ENCODE measurements at regions of chr17 and their contacts with region 1.

Region 1: DNA sequence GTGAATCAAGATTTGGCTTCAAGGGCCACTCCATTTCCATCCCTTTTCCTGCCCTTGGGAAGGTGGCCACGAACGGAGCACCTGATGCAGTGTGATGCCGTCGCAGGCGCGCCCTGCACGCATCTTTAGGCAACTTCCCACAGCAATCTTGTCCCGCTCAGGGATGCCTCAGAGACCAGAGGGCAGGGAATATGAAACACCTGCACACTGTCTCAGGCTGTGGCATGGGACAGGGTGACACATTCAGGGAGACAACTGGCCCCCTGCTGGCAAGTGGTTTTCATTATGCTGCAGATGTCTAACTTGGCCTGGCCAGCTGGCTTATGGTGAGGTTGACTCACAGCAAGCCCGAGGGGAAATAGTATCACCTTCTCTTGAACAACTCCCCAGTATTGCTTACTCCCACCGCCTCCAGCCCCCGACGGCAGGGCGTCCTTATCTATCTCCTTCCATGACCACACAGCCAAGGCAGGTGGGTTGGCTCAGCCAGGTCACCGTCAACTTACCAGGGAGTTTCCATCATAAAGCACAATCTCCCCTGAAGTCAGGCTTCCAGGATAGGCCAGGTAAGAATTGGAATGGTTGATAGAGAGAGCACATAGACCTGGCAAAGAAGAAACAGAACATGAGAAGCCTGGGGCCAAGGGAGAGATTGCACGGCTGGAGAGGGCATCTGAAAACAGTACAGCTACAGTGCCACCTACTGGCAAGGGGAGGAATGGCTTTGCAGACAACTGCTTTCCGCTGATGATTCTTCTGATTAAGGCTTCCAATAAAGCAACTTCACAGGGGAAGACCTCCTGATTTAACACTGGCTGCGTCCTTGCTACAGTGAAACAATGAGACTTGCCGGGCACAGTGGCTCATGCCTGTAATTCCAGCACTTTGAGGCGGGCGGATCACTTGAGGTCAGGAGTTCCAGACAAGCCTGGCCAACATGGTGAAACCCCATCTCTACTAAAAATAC is 21.1 kb downstream of the WIPI1 start:
- ATAC-seq: peak; percentile 52 to 89 (median 82)
- H3K4me3 ChIP-seq: no peak overlapping the region
- H3K27ac ChIP-seq: no peak overlapping the region
- H3K4me1 ChIP-seq: no peaks in the 10 kb centered on the region

Region 2: GRCh38 chr17:68053231-68054013 is 382.7 kb before region 1 on chr17:
- in situ Hi-C with region 1: no loop called
- ATAC-seq: peak in 4 of 8 experiments; percentile 40 to 80 (median 68)
- H3K4me3 ChIP-seq: no peak overlapping the region
- H3K27ac ChIP-seq: no peak overlapping the region
- H3K4me1 ChIP-seq: no peaks in the 10 kb centered on the region

Region 3: GRCh38 chr17:68255731-68256538 is 180.2 kb before region 1 on chr17:
- in situ Hi-C with region 1: loop called in 4 of 9 experiments (anchors 10 to 25 kb)
- ATAC-seq: no peak
- H3K4me3 ChIP-seq: no peak overlapping the region
- H3K27ac ChIP-seq: no peak overlapping the region
- H3K4me1 ChIP-seq: peaks cover 7 to 17% of the 10 kb centered on the region in 2 donors

Region 4: GRCh38 chr17:68291844-68292695 is 144.1 kb before region 1 on chr17:
- in situ Hi-C with region 1: loop called in 1 of 9 experiments (anchors 25 kb)
- ATAC-seq: peak; percentile 59 to 70 (median 64)
- H3K4me3 ChIP-seq: peak overlapping the region; percentile 55 to 84 (median 69)
- H3K27ac ChIP-seq: peak overlapping the region; percentile 91 to 94
- H3K4me1 ChIP-seq: peaks cover 17 to 18% of the 10 kb centered on the region in 2 donors